Motor neuron (in vitro differentiated cells): ENCODE measurements at regions of chr12 and their contacts with region 1.

Region 1: GRCh38 chr12:100356644-100357223 is at the start of gene SLC17A8:
- ATAC-seq: peak in 7 of 8 experiments; percentile 20 to 94 (median 93)
- H3K4me3 ChIP-seq: peak within 1 kb of the TSS in 2 of 5 donors; percentile 15 to 22
- H3K27ac ChIP-seq: no peak within 1 kb of the TSS
- H3K4me1 ChIP-seq: peaks cover 7 to 22% of the 10 kb centered on the region in 2 donors
- total RNA-seq, gene SLC17A8: 0.18 to 7.7 (median 0.61) TPM

Region 2: DNA sequence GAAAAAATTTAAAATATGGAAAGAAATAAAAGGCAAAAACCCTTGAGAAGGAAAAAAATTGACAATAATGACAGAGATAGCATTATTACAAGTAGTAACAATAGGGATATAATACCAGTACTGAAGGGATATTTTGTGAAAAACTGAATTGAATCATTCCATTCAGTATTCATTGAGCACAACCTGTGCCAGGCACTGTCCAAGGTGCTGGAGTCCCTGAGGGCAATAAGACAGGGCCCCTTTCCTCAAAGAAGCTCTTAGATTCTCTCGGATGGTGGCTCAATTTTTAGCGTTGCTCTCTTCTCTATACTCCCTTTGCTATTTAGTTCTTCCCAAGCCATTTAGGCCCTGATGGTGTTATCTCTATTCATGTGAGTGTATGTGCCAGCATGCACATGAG is 182.5 kb after region 1 on chr12:
- in situ Hi-C with region 1: loop called in 2 of 9 experiments (anchors 25 kb)
- ATAC-seq: peak in 2 of 8 experiments; percentile 31 to 60
- H3K4me3 ChIP-seq: no peak overlapping the region
- H3K27ac ChIP-seq: no peak overlapping the region
- H3K4me1 ChIP-seq: no peaks in the 10 kb centered on the region

Region 3: DNA sequence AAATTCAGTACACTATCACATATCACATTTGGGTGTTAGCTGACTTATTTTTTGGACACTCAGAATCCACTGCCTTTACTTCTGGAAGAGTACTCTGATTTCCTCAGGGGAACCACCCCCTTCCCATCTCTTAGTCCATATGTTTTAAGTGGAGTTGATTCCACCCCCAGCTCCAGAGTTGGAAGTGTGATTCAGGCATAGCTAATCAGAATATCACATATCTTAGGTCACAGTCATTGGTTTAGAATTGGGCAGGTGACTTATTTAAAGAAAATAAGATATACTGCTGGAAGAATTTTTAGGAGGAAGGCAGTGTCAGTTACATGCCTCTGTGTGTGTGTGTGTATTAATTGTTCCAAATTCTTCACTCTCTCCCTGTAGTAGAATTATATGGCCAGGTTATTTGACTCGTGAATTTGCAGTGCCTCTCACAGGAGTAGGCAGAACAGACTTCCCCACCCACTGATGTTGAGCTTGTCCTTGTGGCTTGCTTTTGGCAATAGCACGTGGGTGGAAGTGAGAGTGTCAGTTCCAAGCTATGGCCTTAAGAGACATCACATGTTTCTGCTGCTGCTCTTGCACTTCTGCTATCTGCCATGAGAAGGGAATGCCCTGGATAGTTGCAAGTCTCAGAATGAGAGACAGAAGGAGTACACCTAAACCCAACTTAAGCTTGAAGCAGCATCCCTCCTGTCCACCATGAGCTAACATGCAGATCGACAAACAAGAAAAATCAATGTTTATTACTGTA is 210.3 kb after region 1 on chr12:
- in situ Hi-C with region 1: loop called in 4 of 9 experiments (anchors 10 to 25 kb)
- ATAC-seq: peak in 4 of 8 experiments; percentile 21 to 69 (median 43)
- H3K4me3 ChIP-seq: no peak overlapping the region
- H3K27ac ChIP-seq: no peak overlapping the region
- H3K4me1 ChIP-seq: peaks cover 0 to 4% of the 10 kb centered on the region in 2 donors

Region 4: DNA sequence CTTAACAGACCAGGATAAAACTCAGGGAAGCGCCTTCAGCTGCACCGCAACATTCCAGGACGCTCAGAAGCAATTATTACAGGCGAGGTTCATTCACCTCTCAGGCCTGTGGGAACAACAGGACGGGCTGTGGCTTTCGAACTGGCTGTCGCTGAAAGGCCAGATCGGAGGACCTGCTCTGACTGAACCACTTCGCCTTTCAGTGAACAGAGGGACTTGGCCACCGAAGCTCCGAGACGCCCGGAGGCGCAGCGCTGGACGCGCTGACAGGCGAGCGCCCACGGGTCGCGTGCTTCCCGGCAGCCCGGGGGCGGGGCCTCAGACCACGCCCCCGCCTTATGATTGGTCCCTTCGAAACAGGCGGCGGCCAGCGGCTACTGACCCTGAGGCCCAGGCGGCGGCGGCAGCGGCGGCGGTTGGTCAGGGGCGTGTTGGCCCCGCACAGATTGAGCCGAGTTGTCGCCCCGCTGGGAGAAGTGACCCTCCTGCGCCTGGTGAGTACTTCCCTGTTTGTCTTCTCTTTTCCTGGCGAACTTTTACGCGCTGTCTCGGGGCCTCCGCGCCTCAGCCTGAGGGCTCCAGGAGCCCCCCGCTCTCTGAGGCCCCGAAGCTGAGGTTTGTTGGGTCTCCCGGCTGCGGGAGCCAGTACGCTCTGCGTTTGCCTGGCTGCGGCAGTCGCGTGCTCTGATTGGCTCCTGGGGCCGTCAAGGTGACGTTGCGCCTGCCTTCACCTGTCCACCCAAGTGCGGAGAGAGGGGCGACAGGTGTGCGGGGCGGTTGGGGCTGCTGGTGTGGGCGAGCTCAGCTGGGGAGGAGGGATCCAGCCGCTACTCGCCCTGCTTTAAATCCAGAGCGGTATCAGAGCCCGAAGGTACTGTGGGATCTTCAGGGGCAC is 216.8 kb after region 1 on chr12 and contains the start of gene GAS2L3:
- in situ Hi-C with region 1: loop called in 4 of 9 experiments (anchors 10 to 25 kb)
- ATAC-seq: peak; percentile 90 to 95 (median 94)
- H3K4me3 ChIP-seq: peak within 1 kb of the TSS; percentile 54 to 87 (median 61)
- H3K27ac ChIP-seq: peak within 1 kb of the TSS in 1 of 2 donors; percentile 38
- H3K4me1 ChIP-seq: no peaks in the 10 kb centered on the region
- total RNA-seq, gene GAS2L3: 1.2 to 21.6 (median 8.1) TPM

Region 5: DNA sequence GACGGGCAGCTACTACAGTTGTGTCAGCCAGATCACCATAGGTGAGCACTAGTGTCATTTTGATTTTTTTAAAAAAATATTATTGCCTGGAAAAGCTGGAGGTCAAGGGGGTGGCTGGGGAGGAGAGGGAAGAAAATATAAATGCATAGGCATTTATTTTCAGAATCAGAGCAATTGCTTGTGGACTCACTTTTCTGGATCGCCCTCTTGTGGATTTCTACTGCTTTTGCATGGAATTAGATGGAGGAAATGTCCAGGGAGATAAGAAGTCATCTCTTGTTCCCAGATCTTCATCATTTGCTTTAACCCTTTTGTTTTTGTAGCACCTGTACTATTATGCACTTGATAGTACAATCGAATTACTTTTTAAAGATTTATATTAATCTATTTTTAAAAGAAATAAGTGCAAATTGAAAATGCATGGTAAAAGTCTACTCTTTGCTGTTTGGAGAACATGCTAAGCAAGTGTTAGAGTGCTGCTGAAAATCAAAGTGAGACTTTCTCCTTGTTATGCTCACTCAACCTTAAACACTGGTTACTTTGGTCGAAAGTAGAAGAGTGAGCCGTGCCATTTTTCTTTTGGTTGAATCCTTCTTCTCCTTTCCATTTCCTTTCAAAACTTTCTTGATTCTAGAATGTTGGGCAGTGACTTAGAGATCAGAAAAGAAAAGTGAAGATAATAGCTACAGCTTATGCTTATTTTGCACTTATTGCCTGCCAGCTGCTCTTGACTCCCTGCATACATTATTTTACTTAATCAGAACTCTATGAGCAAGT is 377.3 kb after region 1 on chr12:
- in situ Hi-C with region 1: loop called in 1 of 9 experiments (anchors 25 kb)
- ATAC-seq: peak in 4 of 8 experiments; percentile 36 to 50 (median 46)
- H3K4me3 ChIP-seq: no peak overlapping the region
- H3K27ac ChIP-seq: no peak overlapping the region
- H3K4me1 ChIP-seq: no peaks in the 10 kb centered on the region